Right ventricle myocardium inferior (tissue), 1 donor: ENCODE measurements at regions of chr22 and their contacts with region 1.

Region 1: GRCh38 chr22:29072193-29072978 is 449 bp upstream of the KREMEN1 start:
- DNase-seq: peak; percentile 94
- ATAC-seq: peak; percentile 94

Region 2: DNA sequence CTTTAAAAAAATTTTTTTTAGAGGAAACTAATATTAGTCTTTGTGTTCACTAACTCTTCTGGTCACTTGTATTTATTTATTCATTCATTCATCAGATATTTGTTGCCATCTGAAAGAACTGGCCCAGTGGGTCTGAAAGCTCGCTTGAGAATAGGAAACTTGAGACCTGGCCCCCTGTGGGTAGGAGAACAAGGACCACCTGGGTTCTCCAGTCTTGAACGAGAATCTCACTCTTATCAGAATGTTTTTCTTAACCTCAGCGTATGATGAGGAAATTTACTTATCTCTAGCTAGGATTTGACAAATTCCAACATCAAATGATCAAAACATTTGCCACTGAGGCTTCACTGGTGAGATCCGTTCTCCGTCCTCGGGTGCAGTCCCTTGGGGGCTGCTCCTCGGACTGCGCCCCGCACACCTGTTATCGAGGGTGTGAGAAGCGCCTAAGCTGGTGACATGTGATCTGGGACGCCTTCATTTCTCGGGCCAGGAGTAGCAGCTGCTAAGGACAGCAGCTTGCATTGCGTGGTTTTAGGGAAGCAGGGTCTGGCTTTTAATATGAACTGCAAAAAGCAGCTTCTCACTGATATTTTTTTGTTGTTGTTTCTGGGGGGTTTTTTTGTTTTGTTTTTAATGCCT is 17.1 kb before region 1 on chr22:
- intact Hi-C with region 1: no loop called
- DNase-seq: no peak
- ATAC-seq: no peak

Region 3: DNA sequence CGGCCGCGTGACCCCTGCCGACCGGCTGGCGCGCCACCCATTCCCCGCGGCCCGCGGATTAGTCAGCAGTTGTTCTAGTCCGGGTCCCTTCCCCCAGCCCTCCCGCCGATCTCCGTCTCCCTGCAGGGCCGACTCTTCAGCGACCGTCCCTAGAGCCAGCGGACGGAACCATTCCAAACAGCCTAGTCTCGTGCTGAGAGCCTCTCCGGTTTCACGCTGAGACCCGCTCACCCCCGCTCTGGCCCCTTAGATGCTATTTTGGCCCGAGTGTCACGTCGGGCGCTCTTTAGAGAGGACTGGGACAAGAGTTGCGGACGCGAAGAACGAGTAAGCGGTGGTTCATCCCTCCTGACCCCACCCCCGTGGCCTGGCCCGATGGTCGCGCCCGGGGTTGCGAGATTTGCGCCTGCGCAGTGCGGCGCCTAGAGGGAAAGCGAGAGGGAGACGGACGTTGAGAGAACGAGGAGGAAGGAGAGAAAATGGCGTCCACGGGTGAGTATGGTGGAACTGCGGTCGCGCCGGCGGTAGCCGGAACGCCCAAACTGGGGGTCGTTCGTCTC is 195.6 kb after region 1 on chr22 and contains the starts of genes EWSR1 and RHBDD3:
- intact Hi-C with region 1: loop called (anchors 10 kb)
- DNase-seq: peak; percentile 97
- ATAC-seq: peak; percentile 95
- total RNA-seq, gene EWSR1: 112 TPM
- total RNA-seq, gene RHBDD3: 11.6 TPM